ENCODE measurements at regions of chr10 and their contacts with region 1.

Region 1: GRCh38 chr10:68156373-68157185 is 47.3 kb downstream of the MYPN start:
- DNase-seq: peak; percentile 71
- H3K4me3 ChIP-seq: no peak overlapping the region
- H3K27ac ChIP-seq: no peak overlapping the region
- H3K4me1 ChIP-seq: no peaks in the 10 kb centered on the region
- H3K27me3 ChIP-seq: no peaks in the 10 kb centered on the region
- CTCF ChIP-seq: peak; percentile 82

Region 2: DNA sequence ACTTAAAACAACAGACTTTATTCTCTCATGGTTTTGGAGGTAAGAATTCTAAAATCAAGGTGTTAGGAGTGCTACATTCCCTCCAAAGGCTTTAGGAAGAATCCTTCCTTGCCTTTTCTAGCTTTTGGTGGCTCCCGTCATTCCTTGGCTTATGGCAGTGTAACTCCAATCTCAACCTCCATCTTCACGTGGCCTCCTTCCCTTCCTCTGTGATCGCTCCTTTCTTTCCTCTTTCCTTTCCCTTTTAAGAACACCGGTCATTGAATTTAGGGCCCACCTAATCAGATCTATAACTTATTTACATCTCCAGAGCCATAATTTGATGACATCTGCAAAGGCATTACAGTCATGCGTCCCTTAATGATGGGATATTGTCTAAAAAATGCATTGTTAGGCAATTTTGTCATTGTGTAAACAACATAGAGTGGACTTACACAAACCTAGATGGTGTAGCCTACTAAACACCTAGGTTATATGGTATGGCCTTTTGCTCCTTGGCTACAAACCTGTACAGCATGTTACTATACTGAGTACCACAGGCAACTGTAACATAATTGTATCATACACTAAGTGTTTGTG is 75.6 kb before region 1 on chr10:
- intact Hi-C with region 1: loop called (anchors 2 kb)
- DNase-seq: no peak
- H3K4me3 ChIP-seq: no peak overlapping the region
- H3K27ac ChIP-seq: no peak overlapping the region
- H3K4me1 ChIP-seq: no peaks in the 10 kb centered on the region
- H3K27me3 ChIP-seq: no peaks in the 10 kb centered on the region
- CTCF ChIP-seq: no peak

Region 3: GRCh38 chr10:68385740-68386139 is 229.2 kb after region 1 on chr10:
- intact Hi-C with region 1: no loop called
- DNase-seq: no peak
- H3K4me3 ChIP-seq: no peak overlapping the region
- H3K27ac ChIP-seq: no peak overlapping the region
- H3K4me1 ChIP-seq: no peaks in the 10 kb centered on the region
- H3K27me3 ChIP-seq: no peaks in the 10 kb centered on the region
- CTCF ChIP-seq: no peak

Measured in colonic mucosa (tissue), 4 donors.